ENCODE measurements at regions of chr2 and their contacts with region 1.

Region 1: GRCh38 chr2:62456721-62457539 is 49.1 kb downstream of the TMEM17 start:
- DNase-seq: no peak
- ATAC-seq: peak; percentile 94
- H3K4me3 ChIP-seq: peak overlapping the region; percentile 37 to 58
- H3K27ac ChIP-seq: peak overlapping the region; percentile 74
- H3K4me1 ChIP-seq: peaks cover 22 to 49% of the 10 kb centered on the region in 2 experiments
- H3K27me3 ChIP-seq: no peaks in the 10 kb centered on the region
- CTCF ChIP-seq: peak in 2 of 3 experiments; percentile 79 to 88; a peak in 4 of 6 replicates
- POLR2A ChIP-seq: no peak
- RAD21 ChIP-seq: no peak

Region 2: DNA sequence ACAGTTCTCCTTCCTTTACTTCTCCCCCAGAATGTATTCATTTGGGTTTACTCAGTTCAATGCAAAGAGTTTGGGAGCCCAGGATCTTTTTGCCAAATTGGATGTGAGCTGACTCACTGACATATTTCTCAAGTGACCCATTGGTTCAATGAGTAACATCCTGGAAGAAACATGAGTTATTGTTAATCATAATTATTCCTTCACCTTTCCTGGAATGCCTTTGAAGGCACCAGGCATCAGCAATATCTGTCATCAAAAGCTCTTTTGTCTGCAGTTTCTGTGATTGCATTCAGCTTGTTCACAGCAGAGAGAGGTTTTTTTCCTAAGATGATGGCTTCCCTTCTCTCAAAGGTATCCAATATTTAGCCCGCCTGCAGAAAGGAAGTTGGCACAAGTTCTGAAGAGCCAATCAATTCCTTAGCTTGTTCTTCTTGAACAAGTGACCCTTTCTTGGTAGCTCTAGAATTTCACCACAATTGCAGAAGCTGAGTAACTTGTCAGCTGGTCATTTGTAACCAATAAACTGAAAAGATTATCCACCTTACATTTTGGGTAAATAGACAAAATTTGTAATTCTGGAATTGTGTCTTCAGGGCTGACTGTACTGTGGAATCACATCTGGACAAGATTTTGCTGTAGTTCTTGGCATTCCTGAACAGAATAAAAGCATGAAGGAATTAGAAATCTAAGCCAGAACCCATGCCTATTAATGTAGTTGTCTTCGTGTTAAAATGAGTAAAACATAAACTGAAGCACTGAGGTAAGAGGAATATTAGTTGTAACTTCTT is 121.3 kb after region 1 on chr2:
- CTCF ChIA-PET with region 1: interaction called, 12 read pairs
- POLR2A ChIA-PET with region 1: interaction called, 22 read pairs
- RAD21 ChIA-PET with region 1: interaction called, 3 to 9 read pairs
- intact Hi-C with region 1: loop called (anchors 2 kb)
- DNase-seq: peak; percentile 99
- ATAC-seq: peak; percentile 80
- H3K4me3 ChIP-seq: peak overlapping the region in 1 of 2 experiments; percentile 28; a peak in 2 of 4 replicates
- H3K27ac ChIP-seq: peak overlapping the region; percentile 98
- H3K4me1 ChIP-seq: peaks cover 44 to 54% of the 10 kb centered on the region in 2 experiments
- H3K27me3 ChIP-seq: no peaks in the 10 kb centered on the region
- CTCF ChIP-seq: no peak
- POLR2A ChIP-seq: no peak
- RAD21 ChIP-seq: peak; percentile 54

Region 3: GRCh38 chr2:62724886-62725711 is 268.2 kb after region 1 on chr2:
- CTCF ChIA-PET with region 1: interaction called, 5 read pairs
- POLR2A ChIA-PET with region 1: no interaction called
- RAD21 ChIA-PET with region 1: no interaction called
- intact Hi-C with region 1: loop called (anchors 1 kb)
- DNase-seq: peak; percentile 22
- ATAC-seq: peak; percentile 95
- H3K4me3 ChIP-seq: no peak overlapping the region
- H3K27ac ChIP-seq: peak overlapping the region; percentile 49
- H3K4me1 ChIP-seq: peaks cover 36 to 54% of the 10 kb centered on the region in 2 experiments
- H3K27me3 ChIP-seq: no peaks in the 10 kb centered on the region
- CTCF ChIP-seq: peak; percentile 29 to 70 (median 63); a peak in 5 of 6 replicates
- POLR2A ChIP-seq: no peak
- RAD21 ChIP-seq: peak; percentile 69

Region 4: GRCh38 chr2:63023444-63023843 is 566.5 kb after region 1 on chr2:
- CTCF ChIA-PET with region 1: interaction called, 3 read pairs
- POLR2A ChIA-PET with region 1: no interaction called
- RAD21 ChIA-PET with region 1: no interaction called
- intact Hi-C with region 1: loop called (anchors 2 kb)
- DNase-seq: peak; percentile 54
- ATAC-seq: peak; percentile 96
- H3K4me3 ChIP-seq: no peak overlapping the region
- H3K27ac ChIP-seq: no peak overlapping the region
- H3K4me1 ChIP-seq: no peaks in the 10 kb centered on the region; a peak in 1 of 4 replicates
- H3K27me3 ChIP-seq: no peaks in the 10 kb centered on the region
- CTCF ChIP-seq: peak; percentile 40 to 69 (median 53); a peak in 5 of 6 replicates
- POLR2A ChIP-seq: no peak
- RAD21 ChIP-seq: peak; percentile 70

Region 5: DNA sequence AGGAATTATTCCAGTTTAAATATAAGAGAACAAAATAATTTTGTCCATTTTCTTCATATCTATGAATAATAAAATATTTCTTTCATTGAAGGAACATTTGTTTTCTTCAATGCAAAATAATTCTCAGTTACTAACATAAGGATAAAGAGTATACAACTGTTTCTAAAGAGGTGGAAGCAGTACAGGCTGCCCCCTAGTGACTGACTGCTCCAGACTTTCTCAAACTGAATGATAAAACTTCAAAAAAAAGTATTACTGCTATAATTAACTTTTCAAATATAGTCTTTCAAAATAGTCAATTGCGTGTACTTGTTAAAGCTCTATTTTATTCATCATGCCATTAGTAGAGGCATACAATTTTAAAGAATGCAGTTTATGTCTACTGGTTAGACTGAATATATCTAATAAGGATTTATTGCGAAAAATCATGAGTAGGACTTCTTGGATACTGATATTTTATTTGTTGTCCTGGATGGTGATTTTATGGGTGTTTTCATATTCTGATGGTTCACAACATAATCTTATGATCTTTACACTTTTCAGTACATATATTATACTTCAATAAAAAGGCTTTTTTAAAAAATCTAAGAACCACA is 1031.3 kb after region 1 on chr2:
- CTCF ChIA-PET with region 1: no interaction called
- POLR2A ChIA-PET with region 1: no interaction called
- RAD21 ChIA-PET with region 1: no interaction called
- intact Hi-C with region 1: loop called (anchors 10 kb)
- DNase-seq: peak; percentile 15
- ATAC-seq: 0 out of 2 replicates have a peak, but pooled peaks have one; percentile 62
- H3K4me3 ChIP-seq: no peak overlapping the region
- H3K27ac ChIP-seq: no peak overlapping the region
- H3K4me1 ChIP-seq: no peaks in the 10 kb centered on the region
- H3K27me3 ChIP-seq: no peaks in the 10 kb centered on the region
- CTCF ChIP-seq: peak; percentile 41 to 76 (median 72); a peak in 5 of 6 replicates
- POLR2A ChIP-seq: no peak
- RAD21 ChIP-seq: peak; percentile 56

Measured in HCT116 (cell line).